Ovary (tissue), 10 donors: ENCODE measurements at regions of chr1 and their contacts with region 1.

Region 1: GRCh38 chr1:48688102-48688760 is 88.5 kb downstream of the BEND5 start:
- DNase-seq: no peak
- H3K4me3 ChIP-seq: no peak overlapping the region
- H3K27ac ChIP-seq: no peak overlapping the region
- H3K4me1 ChIP-seq: peaks cover 2% of the 10 kb centered on the region
- H3K27me3 ChIP-seq: no peaks in the 10 kb centered on the region
- CTCF ChIP-seq: no peak
- EP300 ChIP-seq: no peak
- POLR2A ChIP-seq: no peak

Region 2: DNA sequence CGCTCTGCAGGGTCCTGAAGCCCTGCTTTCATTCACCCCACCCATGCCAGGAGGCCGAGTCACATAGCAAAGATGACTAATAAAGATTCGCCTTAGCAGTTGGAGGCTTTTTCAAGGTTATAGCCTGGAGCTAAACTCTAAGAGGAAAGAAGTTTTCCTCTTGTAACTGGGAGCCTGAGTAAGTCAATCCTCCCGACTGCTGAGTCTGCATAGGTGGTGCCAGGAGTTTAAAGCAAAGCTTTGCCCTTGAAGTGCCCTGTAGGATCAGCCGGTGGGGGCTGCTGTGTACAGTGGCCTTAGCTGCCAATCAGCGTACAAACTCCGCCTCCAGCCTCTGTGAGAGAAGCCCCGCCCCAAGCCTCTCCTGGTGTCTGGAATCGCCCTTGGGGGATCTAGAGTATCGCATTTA is 68.7 kb before region 1 on chr1:
- intact Hi-C with region 1: no loop called
- DNase-seq: peak in 1 of 5 donors; percentile 10
- H3K4me3 ChIP-seq: no peak overlapping the region
- H3K27ac ChIP-seq: no peak overlapping the region
- H3K4me1 ChIP-seq: no peaks in the 10 kb centered on the region
- H3K27me3 ChIP-seq: no peaks in the 10 kb centered on the region
- CTCF ChIP-seq: no peak
- EP300 ChIP-seq: no peak
- POLR2A ChIP-seq: no peak

Region 3: GRCh38 chr1:48807554-48808260 is 119.5 kb after region 1 on chr1:
- intact Hi-C with region 1: loop called in 1 of 4 experiments (anchors 10 kb)
- DNase-seq: no peak
- H3K4me3 ChIP-seq: no peak overlapping the region
- H3K27ac ChIP-seq: no peak overlapping the region
- H3K4me1 ChIP-seq: no peaks in the 10 kb centered on the region
- H3K27me3 ChIP-seq: no peaks in the 10 kb centered on the region
- CTCF ChIP-seq: no peak
- EP300 ChIP-seq: no peak
- POLR2A ChIP-seq: no peak